Activated CD4-positive, alpha-beta T cell treated with anti-CD3 and anti-CD28 coated beads for 36 hours (primary cell): ENCODE measurements at regions of chr6 and their contacts with region 1.

Region 1: GRCh38 chr6:44475779-44476434 is 88.4 kb downstream of the CDC5L start:
- DNase-seq: peak; percentile 86
- ATAC-seq: peak; percentile 94
- H3K4me3 Mint-ChIP-seq: no peak overlapping the region
- H3K27ac Mint-ChIP-seq: no peak overlapping the region
- H3K4me1 Mint-ChIP-seq: no peaks in the 10 kb centered on the region
- H3K27me3 Mint-ChIP-seq: no peaks in the 10 kb centered on the region

Region 2: DNA sequence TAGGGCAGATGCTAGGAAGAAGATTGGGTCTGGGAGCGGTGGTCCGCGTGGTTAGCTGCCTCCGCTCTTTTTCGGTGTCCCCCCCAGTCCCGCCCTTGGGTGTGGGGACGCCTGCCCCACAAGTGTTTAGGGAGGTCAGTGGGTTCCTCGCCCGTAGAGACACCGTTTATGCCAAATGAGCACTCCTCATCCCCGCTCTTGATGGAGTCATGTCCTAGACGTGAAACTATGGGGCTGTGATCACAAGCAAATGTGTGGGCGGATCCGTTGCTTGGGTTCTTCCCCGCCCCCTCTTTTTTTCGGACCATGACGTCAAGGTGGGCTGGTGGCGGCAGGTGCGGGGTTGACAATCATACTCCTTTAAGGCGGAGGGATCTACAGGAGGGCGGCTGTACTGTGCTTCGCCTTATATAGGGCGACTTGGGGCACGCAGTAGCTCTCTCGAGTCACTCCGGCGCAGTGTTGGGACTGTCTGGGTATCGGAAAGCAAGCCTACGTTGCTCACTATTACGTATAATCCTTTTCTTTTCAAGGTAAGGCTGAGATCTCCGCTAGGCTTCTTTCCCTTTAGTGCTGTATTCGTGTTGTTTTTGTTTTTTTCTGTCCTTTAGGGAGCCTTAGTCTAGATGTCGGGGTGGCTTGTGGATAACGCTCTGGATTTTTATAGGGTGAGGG is 229.1 kb before region 1 on chr6 and contains the start of gene HSP90AB1:
- CTCF ChIA-PET with region 1: no interaction called
- POLR2A ChIA-PET with region 1: no interaction called
- intact Hi-C with region 1: no loop called
- DNase-seq: peak; percentile 98
- ATAC-seq: peak; percentile 86
- H3K4me3 Mint-ChIP-seq: peak within 1 kb of the TSS; percentile 97
- H3K27ac Mint-ChIP-seq: peak within 1 kb of the TSS; percentile 99
- H3K4me1 Mint-ChIP-seq: peaks cover 44% of the 10 kb centered on the region
- H3K27me3 Mint-ChIP-seq: no peaks in the 10 kb centered on the region
- total RNA-seq, gene HSP90AB1: 2,120 to 2,263 TPM

Region 3: GRCh38 chr6:44381739-44382138 is 94.2 kb before region 1 on chr6:
- CTCF ChIA-PET with region 1: no interaction called
- POLR2A ChIA-PET with region 1: no interaction called
- intact Hi-C with region 1: no loop called
- DNase-seq: no peak
- ATAC-seq: no peak
- H3K4me3 Mint-ChIP-seq: no peak overlapping the region
- H3K27ac Mint-ChIP-seq: no peak overlapping the region
- H3K4me1 Mint-ChIP-seq: peaks cover 4% of the 10 kb centered on the region
- H3K27me3 Mint-ChIP-seq: no peaks in the 10 kb centered on the region

Region 4: DNA sequence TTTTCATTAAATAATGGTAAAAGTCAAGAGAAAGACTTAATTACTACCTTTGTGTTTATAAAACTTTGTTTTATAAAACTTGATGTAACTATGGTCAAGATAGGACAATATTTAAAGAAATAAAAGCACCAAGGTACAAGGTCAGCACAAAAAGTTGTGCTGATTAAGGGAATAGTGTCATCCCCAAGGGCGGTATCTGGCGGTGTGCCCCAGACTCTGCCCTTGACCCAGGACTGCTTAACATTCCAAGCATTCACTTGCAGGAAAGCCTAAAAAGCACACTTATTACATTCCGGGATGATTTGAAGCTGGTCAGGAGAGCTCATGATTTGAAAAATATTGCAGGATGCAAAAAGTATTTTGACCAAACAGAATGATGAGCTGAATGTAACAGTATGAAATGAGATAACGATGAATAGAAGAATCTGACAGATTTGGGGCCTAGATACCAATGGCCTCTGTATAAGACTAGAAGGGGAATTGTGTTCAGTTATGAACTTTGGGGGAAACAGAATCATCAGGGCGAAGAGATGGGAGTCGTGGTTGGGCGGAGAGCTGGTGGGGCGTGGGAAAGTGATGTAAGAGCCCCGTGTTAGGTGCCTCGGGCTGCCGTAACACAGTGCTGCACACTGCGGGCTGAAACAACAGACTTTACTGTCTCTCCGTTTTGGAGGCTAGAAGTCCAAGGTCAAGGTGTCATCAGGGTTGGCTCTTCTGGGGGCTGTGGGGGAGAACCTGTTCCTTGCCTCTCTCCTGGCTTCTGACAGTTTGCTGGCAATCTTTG is 11.2 kb before region 1 on chr6:
- CTCF ChIA-PET with region 1: interaction called, 21 read pairs
- POLR2A ChIA-PET with region 1: no interaction called
- intact Hi-C with region 1: no loop called
- DNase-seq: no peak
- ATAC-seq: no peak
- H3K4me3 Mint-ChIP-seq: no peak overlapping the region
- H3K27ac Mint-ChIP-seq: no peak overlapping the region
- H3K4me1 Mint-ChIP-seq: no peaks in the 10 kb centered on the region
- H3K27me3 Mint-ChIP-seq: no peaks in the 10 kb centered on the region

Region 5: GRCh38 chr6:44556046-44556445 is 80.1 kb after region 1 on chr6:
- CTCF ChIA-PET with region 1: interaction called, 9 read pairs
- POLR2A ChIA-PET with region 1: no interaction called
- intact Hi-C with region 1: loop called in 1 of 2 experiments (anchors 10 kb)
- DNase-seq: no peak
- ATAC-seq: no peak
- H3K4me3 Mint-ChIP-seq: no peak overlapping the region
- H3K27ac Mint-ChIP-seq: no peak overlapping the region
- H3K4me1 Mint-ChIP-seq: no peaks in the 10 kb centered on the region
- H3K27me3 Mint-ChIP-seq: peaks cover 19% of the 10 kb centered on the region

Region 6: DNA sequence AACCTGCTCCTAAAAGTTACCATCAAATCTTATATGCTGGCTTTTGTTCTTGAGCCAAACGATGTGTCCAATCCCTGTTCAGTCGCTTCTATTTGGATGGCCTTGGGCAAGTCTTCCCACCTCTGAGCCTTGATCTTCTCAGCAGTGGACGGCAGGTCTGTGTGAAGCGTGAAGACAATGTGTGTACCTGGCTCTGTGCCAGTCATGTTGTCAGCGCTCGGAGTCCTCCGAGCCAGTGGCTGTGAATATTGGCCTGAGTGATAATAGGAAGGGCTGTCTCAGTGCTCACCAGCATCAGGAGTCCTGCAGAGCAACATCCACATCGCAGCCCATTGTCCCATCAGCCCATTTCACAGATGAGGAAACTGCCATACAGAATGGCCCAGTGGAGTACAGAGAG is 130.6 kb after region 1 on chr6:
- CTCF ChIA-PET with region 1: no interaction called
- POLR2A ChIA-PET with region 1: no interaction called
- intact Hi-C with region 1: loop called in 1 of 2 experiments (anchors 10 kb)
- DNase-seq: no peak
- ATAC-seq: no peak
- H3K4me3 Mint-ChIP-seq: no peak overlapping the region
- H3K27ac Mint-ChIP-seq: no peak overlapping the region
- H3K4me1 Mint-ChIP-seq: no peaks in the 10 kb centered on the region
- H3K27me3 Mint-ChIP-seq: no peaks in the 10 kb centered on the region

Region 7: DNA sequence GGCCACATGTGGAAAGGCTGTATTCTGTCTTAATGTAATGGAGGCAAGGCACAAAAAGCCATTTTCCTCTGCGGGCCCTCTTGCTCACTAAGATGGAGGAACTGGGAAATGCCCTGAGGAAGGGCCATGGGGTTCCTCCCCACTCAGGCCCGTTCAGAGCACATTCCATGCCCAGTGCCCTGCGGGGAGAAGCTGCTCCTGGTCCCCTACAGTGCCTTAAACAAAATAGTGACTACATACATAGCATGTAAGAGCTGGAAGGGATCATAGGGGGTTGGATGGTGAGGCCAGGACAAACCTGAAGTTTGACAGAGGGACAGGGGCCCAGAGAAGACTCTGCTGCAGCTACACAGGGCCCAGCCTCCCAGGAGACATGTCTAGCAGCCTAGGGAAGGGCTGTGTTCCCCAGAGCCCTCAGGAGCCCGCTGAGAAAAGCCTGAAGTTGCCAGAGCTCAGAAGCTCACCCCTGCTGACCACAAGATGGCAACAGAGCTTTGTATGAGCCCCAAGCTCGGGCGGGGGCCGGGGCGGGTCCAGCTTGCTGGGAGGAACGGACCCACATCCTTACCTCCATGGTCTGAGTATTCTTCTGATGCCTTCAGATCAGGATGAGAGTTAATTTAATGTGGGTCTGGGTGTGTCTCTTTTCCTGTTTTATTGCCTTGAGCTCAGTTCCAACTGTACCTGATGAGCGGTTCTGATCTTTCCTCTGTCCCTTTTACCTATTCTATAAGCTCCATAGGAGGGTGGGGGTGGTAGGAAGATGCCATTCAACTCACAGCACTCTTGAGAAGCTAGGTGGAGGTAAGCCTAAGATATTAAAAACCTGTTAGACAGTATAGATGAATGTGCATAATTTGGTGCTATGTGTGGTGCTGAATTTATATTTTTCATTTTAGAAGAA is 154.5 kb after region 1 on chr6:
- CTCF ChIA-PET with region 1: interaction called, 6 read pairs
- POLR2A ChIA-PET with region 1: no interaction called
- intact Hi-C with region 1: loop called in 1 of 2 experiments (anchors 10 kb)
- DNase-seq: peak; percentile 68
- ATAC-seq: peak; percentile 76
- H3K4me3 Mint-ChIP-seq: no peak overlapping the region
- H3K27ac Mint-ChIP-seq: no peak overlapping the region
- H3K4me1 Mint-ChIP-seq: peaks cover 17% of the 10 kb centered on the region
- H3K27me3 Mint-ChIP-seq: peaks cover 4% of the 10 kb centered on the region

Region 8: GRCh38 chr6:44833248-44833647 is 357.3 kb after region 1 on chr6:
- CTCF ChIA-PET with region 1: no interaction called
- POLR2A ChIA-PET with region 1: no interaction called
- intact Hi-C with region 1: no loop called
- DNase-seq: no peak
- ATAC-seq: no peak
- H3K4me3 Mint-ChIP-seq: no peak overlapping the region
- H3K27ac Mint-ChIP-seq: no peak overlapping the region
- H3K4me1 Mint-ChIP-seq: peaks cover 18% of the 10 kb centered on the region
- H3K27me3 Mint-ChIP-seq: no peaks in the 10 kb centered on the region